ENCODE measurements at regions of chr1 and their contacts with region 1.

Region 1: GRCh38 chr1:171644805-171645483 is 7.5 kb downstream of the MYOC start:
- DNase-seq: peak; percentile 82
- ATAC-seq: peak; percentile 86
- H3K4me3 Mint-ChIP-seq: no peak overlapping the region
- H3K27ac Mint-ChIP-seq: no peak overlapping the region
- H3K4me1 Mint-ChIP-seq: peaks cover 6% of the 10 kb centered on the region
- H3K27me3 Mint-ChIP-seq: peaks cover 8% of the 10 kb centered on the region

Region 2: DNA sequence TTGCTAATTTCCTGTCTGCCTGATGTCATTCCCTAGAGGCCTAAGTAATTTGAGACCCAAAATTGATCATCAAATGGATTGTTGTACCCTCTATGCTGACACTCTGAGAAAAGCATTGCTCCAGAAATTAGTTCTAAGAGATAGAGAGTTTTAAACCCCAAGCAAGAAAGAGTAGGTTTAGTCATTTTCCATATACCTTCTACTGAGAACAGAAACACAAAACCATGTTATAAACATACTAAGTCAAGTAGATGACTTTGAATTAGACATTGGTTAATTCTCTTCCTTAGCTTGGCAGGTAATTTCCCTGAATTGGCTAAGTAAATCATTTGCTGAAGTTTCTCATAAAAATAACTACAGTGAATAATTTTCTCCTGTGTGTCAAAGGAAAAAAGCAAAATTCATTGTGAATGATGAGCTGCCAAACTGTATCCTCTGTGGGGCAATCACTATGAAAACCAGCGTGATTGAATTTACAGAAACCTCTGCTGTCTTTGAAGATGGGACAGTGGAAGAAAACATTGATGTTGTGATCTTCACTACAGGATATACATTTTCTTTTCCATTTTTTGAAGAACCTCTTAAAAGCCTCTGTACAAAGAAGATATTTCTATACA is 310.8 kb before region 1 on chr1:
- CTCF ChIA-PET with region 1: no interaction called
- POLR2A ChIA-PET with region 1: no interaction called
- DNase-seq: no peak
- ATAC-seq: no peak
- H3K4me3 Mint-ChIP-seq: no peak overlapping the region
- H3K27ac Mint-ChIP-seq: no peak overlapping the region
- H3K4me1 Mint-ChIP-seq: no peaks in the 10 kb centered on the region
- H3K27me3 Mint-ChIP-seq: no peaks in the 10 kb centered on the region

Region 3: GRCh38 chr1:171566467-171566866 is 78.5 kb before region 1 on chr1:
- CTCF ChIA-PET with region 1: no interaction called
- POLR2A ChIA-PET with region 1: no interaction called
- DNase-seq: no peak
- ATAC-seq: no peak
- H3K4me3 Mint-ChIP-seq: no peak overlapping the region
- H3K27ac Mint-ChIP-seq: no peak overlapping the region
- H3K4me1 Mint-ChIP-seq: no peaks in the 10 kb centered on the region
- H3K27me3 Mint-ChIP-seq: no peaks in the 10 kb centered on the region

Region 4: GRCh38 chr1:171654942-171655745 is 10.2 kb after region 1 on chr1:
- CTCF ChIA-PET with region 1: interaction called, 38 read pairs
- POLR2A ChIA-PET with region 1: no interaction called
- DNase-seq: peak; percentile 76
- ATAC-seq: peak; percentile 78
- H3K4me3 Mint-ChIP-seq: no peak overlapping the region
- H3K27ac Mint-ChIP-seq: no peak overlapping the region
- H3K4me1 Mint-ChIP-seq: peaks cover 13% of the 10 kb centered on the region
- H3K27me3 Mint-ChIP-seq: peaks cover 32% of the 10 kb centered on the region

Region 5: DNA sequence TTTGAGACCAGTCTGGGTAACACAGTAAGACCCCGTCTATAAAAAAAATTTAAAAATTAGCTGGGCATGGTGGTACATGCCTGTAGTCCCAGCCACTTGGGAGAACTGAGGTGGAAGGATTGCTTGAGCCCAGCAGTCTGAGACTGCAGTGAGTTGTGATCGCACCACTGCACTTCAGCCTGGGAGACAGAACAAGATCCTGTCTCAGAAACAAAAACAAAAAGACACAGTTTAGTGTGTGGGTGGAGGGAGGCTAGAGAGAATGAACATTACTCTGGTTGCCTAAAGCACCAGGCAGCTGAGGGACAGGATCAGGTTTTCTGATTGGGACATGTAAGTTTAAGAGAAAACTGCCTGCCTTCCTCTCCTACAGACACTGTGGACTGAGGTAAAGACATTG is 54.6 kb after region 1 on chr1:
- CTCF ChIA-PET with region 1: no interaction called
- POLR2A ChIA-PET with region 1: no interaction called
- DNase-seq: no peak
- ATAC-seq: no peak
- H3K4me3 Mint-ChIP-seq: no peak overlapping the region
- H3K27ac Mint-ChIP-seq: no peak overlapping the region
- H3K4me1 Mint-ChIP-seq: no peaks in the 10 kb centered on the region
- H3K27me3 Mint-ChIP-seq: no peaks in the 10 kb centered on the region

Region 6: DNA sequence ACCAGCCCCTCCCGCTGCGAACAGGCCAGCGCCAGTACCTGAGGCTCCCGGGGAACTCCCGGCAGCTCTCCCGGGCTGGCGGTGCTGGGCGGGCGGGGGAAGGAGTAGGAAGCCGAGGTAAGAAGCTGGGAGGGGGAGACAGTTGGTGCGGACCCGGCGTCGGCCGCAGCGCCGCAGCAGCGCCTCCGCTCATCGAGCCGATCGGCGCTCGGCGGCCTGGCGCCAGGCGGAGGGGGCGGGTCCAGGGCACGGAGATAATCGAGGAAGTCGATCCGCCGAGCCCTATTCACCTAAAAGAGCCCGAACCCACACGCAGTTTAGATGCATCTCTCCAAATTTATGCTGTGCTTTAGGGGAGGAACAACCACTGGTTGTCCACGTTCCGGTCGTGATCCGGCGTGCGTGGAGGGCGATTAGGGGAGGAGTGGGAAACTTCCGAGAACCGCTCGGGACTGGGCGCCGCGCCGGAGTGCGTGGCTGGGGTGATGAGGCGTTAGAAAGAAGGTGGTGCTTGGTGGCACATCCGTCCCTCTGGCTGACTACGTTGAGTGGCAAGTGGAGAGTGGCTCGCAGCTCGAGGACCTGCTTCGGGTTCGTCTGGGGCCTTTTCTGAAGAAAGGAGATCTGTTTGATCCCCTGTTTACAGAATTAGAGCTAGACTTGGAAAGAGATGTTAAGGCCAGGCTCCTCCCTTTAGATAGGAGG is 97.1 kb after region 1 on chr1 and contains the start of gene VAMP4:
- CTCF ChIA-PET with region 1: interaction called, 48 read pairs
- POLR2A ChIA-PET with region 1: no interaction called
- DNase-seq: peak; percentile 90
- ATAC-seq: peak; percentile 97
- H3K4me3 Mint-ChIP-seq: peak within 1 kb of the TSS; percentile 98
- H3K27ac Mint-ChIP-seq: peak within 1 kb of the TSS; percentile 99
- H3K4me1 Mint-ChIP-seq: peaks cover 49% of the 10 kb centered on the region
- H3K27me3 Mint-ChIP-seq: no peaks in the 10 kb centered on the region
- total RNA-seq, gene VAMP4: 12.2 to 13.0 TPM

Region 7: GRCh38 chr1:171984850-171985485 is 340.0 kb after region 1 on chr1:
- CTCF ChIA-PET with region 1: interaction called, 64 read pairs
- POLR2A ChIA-PET with region 1: no interaction called
- DNase-seq: peak; percentile 25
- ATAC-seq: peak; percentile 57
- H3K4me3 Mint-ChIP-seq: no peak overlapping the region
- H3K27ac Mint-ChIP-seq: no peak overlapping the region
- H3K4me1 Mint-ChIP-seq: no peaks in the 10 kb centered on the region
- H3K27me3 Mint-ChIP-seq: peaks cover 9% of the 10 kb centered on the region